MCF 10A (cell line): ENCODE measurements at regions of chr21 and their contacts with region 1.

Region 1: DNA sequence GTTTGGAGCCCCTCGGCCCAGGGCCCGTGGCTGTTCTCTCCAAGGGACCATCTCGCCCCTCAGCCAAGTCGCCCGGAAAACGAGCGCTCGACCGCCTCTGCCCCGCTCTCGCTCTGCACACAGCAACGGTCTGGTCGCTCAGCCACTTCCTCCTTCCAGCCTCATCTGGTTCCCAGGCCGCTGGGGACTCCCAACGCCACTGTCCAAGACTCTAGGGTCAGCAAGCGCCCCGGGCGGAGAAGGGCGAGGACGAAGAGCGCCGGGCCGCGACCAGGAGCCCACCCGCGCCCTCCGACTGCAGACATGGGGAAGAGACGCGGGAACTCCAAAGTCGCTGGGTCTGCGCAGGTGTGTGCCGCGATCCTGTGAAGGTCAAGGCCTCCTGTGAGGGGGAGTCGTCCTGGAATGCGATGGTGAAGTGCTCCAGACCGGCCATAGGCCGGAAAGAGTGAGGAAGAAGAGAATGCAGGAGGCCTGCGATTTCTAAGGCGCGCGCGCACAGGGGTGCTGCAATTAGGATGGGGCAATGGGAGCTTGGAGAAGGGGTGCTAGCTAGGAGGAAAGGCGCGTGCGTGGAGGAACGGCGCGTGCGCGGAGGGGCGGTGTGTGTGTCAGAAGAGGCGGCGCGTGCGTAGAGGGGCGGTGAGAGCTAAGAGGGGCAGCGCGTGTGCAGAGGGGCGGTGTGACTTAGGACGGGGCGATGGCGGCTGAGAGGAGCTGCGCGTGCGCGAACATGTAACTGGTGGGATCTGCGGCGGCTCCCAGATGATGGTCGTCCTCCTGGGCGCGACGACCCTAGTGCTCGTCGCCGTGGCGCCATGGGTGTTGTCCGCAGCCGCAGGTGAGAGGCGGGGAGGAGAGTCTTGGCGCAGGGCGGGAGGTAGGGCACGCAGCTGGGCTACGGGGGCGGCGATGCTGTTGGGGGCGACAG is at the start of gene IFNAR1:
- DNase-seq: peak; percentile 98
- H3K4me3 Mint-ChIP-seq: no peak within 1 kb of the TSS
- H3K27ac Mint-ChIP-seq: no peak within 1 kb of the TSS
- H3K4me1 Mint-ChIP-seq: peaks cover 8% of the 10 kb centered on the region
- H3K27me3 Mint-ChIP-seq: no peaks in the 10 kb centered on the region
- CTCF ChIP-seq: no peak
- total RNA-seq, gene IFNAR1: 30.0 and 35.5 TPM in 2 replicates

Region 2: GRCh38 chr21:33199516-33200217 is 124.9 kb before region 1 on chr21:
- CTCF ChIA-PET with region 1: interaction called, 4 read pairs
- POLR2A ChIA-PET with region 1: interaction called, 25 read pairs
- intact Hi-C with region 1: loop called (anchors 1 kb)
- DNase-seq: peak; percentile 96
- H3K4me3 Mint-ChIP-seq: no peak overlapping the region
- H3K27ac Mint-ChIP-seq: no peak overlapping the region
- H3K4me1 Mint-ChIP-seq: peaks cover 20% of the 10 kb centered on the region
- H3K27me3 Mint-ChIP-seq: peaks cover 20% of the 10 kb centered on the region
- CTCF ChIP-seq: peak; percentile 76

Region 3: DNA sequence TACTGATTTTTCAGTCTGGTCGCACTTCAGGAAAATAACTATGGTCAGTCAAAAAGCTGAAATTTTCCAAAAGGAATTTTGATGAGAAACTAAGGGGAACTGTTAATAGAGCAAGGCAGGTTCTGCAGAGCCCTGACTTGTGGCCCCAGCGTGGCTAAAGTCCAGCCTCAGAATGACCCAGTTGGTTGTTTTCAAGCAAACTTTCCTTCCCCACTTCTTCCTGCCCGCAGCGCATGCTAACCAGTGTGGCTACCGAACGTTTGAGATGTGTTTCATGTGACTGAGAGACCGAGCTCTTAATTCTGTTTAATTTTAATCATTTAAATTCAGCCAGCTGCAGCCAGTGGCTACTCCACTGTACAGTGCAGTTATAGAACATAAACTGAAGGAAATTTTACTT is 64.6 kb before region 1 on chr21:
- CTCF ChIA-PET with region 1: no interaction called
- POLR2A ChIA-PET with region 1: interaction called, 53 read pairs
- intact Hi-C with region 1: loop called (anchors 2 kb)
- DNase-seq: no peak
- H3K4me3 Mint-ChIP-seq: no peak overlapping the region
- H3K27ac Mint-ChIP-seq: peak overlapping the region; percentile 19
- H3K4me1 Mint-ChIP-seq: peaks cover 10% of the 10 kb centered on the region
- H3K27me3 Mint-ChIP-seq: no peaks in the 10 kb centered on the region
- CTCF ChIP-seq: no peak

Region 4: DNA sequence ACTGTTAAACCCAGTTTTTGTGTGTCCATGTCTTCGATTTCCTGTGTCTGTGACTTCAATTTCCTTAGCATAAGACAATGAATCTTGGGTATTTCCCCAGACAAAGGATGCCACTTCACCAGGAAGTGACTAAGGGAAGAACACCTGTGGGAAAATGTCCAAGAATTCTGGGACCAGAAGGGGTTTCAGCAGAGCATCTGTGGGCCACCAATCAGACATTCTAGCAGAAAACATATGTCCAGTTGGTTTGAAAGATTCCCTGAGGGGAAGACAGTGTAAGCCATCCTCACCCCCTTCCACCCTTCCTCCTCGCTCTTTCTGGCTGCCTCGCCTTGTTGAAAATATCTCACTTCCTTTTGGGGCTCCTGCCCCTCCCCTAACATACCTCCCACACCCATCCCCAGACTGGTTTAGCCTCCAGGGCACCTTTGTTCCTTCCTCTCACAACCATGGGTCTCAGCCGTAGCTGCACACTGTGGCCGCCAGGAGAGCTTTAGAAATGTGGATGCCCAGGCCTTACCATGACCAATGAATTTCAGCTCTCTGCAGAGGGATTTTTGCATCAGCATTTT is 25.3 kb before region 1 on chr21:
- CTCF ChIA-PET with region 1: interaction called, 3 read pairs
- POLR2A ChIA-PET with region 1: interaction called, 28 read pairs
- intact Hi-C with region 1: no loop called
- DNase-seq: peak; percentile 86
- H3K4me3 Mint-ChIP-seq: peak overlapping the region; percentile 44
- H3K27ac Mint-ChIP-seq: peak overlapping the region; percentile 90
- H3K4me1 Mint-ChIP-seq: peaks cover 12% of the 10 kb centered on the region
- H3K27me3 Mint-ChIP-seq: no peaks in the 10 kb centered on the region
- CTCF ChIP-seq: no peak

Region 5: DNA sequence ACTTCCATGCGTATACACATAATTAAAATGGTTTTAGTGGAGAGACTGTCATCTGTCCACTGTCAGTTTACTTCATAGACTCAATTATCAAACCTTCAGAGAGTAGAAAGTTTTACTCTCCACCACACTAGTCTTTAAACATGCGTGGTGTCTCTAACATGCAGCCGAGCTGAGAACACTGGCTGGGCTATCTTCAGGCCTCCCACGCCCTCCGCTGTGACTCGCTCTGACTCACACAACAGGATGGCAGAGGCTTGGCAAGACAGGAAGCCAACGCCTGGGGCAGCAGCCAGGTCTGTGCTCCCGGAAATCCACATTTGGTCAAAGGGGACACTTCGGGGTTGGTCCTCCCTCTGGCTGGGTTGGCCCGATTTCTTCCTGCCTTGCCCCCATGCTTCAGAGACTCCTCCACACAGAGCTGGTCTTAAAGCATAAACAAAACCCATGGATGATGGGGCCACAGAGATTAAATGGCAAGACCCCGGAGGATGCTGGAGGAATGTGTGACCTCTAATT is 56.0 kb after region 1 on chr21:
- CTCF ChIA-PET with region 1: no interaction called
- POLR2A ChIA-PET with region 1: interaction called, 32 read pairs
- intact Hi-C with region 1: no loop called
- DNase-seq: peak; percentile 99
- H3K4me3 Mint-ChIP-seq: peak overlapping the region; percentile 38
- H3K27ac Mint-ChIP-seq: peak overlapping the region; percentile 88
- H3K4me1 Mint-ChIP-seq: peaks cover 42% of the 10 kb centered on the region
- H3K27me3 Mint-ChIP-seq: no peaks in the 10 kb centered on the region
- CTCF ChIP-seq: no peak

Region 6: GRCh38 chr21:33434770-33435360 is 110.3 kb after region 1 on chr21:
- CTCF ChIA-PET with region 1: no interaction called
- POLR2A ChIA-PET with region 1: interaction called, 22 read pairs
- intact Hi-C with region 1: no loop called
- DNase-seq: peak; percentile 94
- H3K4me3 Mint-ChIP-seq: peak overlapping the region; percentile 61
- H3K27ac Mint-ChIP-seq: peak overlapping the region; percentile 95
- H3K4me1 Mint-ChIP-seq: peaks cover 21% of the 10 kb centered on the region
- H3K27me3 Mint-ChIP-seq: no peaks in the 10 kb centered on the region
- CTCF ChIP-seq: no peak

Region 7: DNA sequence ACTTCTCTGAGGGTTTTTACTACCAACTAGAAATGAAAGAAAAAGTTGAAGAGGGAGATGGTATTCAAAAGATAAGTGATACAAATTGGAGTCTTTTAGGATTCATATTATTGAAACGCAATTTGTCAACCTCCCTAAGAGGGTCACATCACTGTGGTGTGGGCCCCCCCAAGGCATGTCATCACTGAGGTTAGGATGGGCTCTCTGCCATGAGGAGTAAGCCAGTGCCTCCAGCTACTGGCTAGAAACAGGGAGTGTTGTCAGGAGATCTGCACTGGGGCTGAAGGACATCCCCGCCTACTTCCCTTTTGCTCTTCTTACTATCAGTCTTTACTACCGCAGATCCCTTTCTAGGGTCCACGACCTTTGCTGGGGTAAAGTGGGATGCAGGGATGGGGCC is 343.6 kb after region 1 on chr21:
- CTCF ChIA-PET with region 1: no interaction called
- POLR2A ChIA-PET with region 1: no interaction called
- intact Hi-C with region 1: no loop called
- DNase-seq: no peak
- H3K4me3 Mint-ChIP-seq: no peak overlapping the region
- H3K27ac Mint-ChIP-seq: peak overlapping the region; percentile 33
- H3K4me1 Mint-ChIP-seq: peaks cover 11% of the 10 kb centered on the region
- H3K27me3 Mint-ChIP-seq: no peaks in the 10 kb centered on the region
- CTCF ChIP-seq: no peak

Region 8: DNA sequence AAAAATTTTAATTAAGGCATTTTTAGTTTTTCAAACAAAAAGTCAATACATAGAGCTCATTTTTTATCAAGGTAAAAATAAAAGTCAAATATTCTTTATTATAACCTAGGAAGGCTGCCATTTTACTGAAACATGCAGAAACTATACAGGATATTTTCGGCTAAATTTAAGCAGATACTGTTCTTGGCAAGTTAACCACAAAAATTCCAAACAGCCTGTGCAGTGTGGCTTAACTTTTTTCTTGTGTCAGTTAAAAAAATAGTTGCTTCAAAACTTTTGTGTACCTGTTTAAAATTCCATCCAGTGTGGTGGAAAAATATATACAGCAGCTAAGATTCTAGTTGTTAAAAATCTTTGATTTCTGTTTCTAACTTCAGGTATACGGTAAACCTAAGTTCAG is 456.1 kb after region 1 on chr21:
- CTCF ChIA-PET with region 1: no interaction called
- POLR2A ChIA-PET with region 1: no interaction called
- intact Hi-C with region 1: no loop called
- DNase-seq: no peak
- H3K4me3 Mint-ChIP-seq: no peak overlapping the region
- H3K27ac Mint-ChIP-seq: no peak overlapping the region
- H3K4me1 Mint-ChIP-seq: no peaks in the 10 kb centered on the region
- H3K27me3 Mint-ChIP-seq: no peaks in the 10 kb centered on the region
- CTCF ChIP-seq: no peak